ENCODE measurements at regions of chr16 and their contacts with region 1.

Region 1: DNA sequence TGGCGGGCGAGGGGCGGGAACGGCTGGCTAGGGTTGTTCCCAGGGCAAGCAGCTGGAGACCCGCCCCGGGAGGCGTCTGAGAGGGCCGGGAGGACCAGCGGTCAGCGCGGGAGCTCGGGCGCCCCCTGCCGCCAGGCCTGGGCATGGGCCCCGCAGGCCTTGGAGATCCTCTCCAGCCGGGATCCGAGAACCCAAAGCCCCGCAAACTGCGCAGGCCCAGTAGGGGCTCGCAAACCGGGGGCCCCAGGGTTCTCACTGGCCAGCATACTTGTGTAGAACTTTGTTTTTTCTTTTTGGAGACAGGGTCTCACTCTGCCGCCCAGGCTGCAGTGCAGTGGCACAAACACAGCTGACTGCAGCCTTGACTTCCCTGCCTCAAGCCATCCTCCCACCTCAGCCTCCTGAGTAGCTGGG is 20.8 kb upstream of the ZNF423 start:
- DNase-seq: peak in 1 of 2 donors; percentile 84
- H3K4me3 ChIP-seq: peak overlapping the region; percentile 40 to 61
- H3K27ac ChIP-seq: no peak overlapping the region
- H3K4me1 ChIP-seq: peaks cover 2 to 8% of the 10 kb centered on the region in 2 donors
- H3K27me3 ChIP-seq: no peaks in the 10 kb centered on the region
- CTCF ChIP-seq: peak; percentile 74 to 96 (median 93)

Region 2: GRCh38 chr16:49608779-49609178 is 267.9 kb before region 1 on chr16:
- intact Hi-C with region 1: loop called (anchors 5 kb)
- DNase-seq: peak in 1 of 2 donors; percentile 63
- H3K4me3 ChIP-seq: no peak overlapping the region
- H3K27ac ChIP-seq: no peak overlapping the region
- H3K4me1 ChIP-seq: no peaks in the 10 kb centered on the region
- H3K27me3 ChIP-seq: no peaks in the 10 kb centered on the region
- CTCF ChIP-seq: peak in 2 of 3 experiments; percentile 18 to 56

Measured in ascending aorta (tissue), 2 donors.